Prostate gland (tissue), 2 donors: ENCODE measurements at regions of chr6 and their contacts with region 1.

Region 1: GRCh38 chr6:3929281-3929798 is 80.2 kb downstream of the FAM50B start:
- DNase-seq: no peak
- H3K4me3 ChIP-seq: no peak overlapping the region
- H3K27ac ChIP-seq: no peak overlapping the region
- H3K4me1 ChIP-seq: no peaks in the 10 kb centered on the region
- H3K27me3 ChIP-seq: no peaks in the 10 kb centered on the region
- CTCF ChIP-seq: no peak
- POLR2A ChIP-seq: no peak

Region 2: GRCh38 chr6:3742426-3743344 is 186.7 kb before region 1 on chr6:
- intact Hi-C with region 1: loop called (anchors 1 kb)
- DNase-seq: peak; percentile 86
- H3K4me3 ChIP-seq: no peak overlapping the region
- H3K27ac ChIP-seq: peak overlapping the region; percentile 65 to 71
- H3K4me1 ChIP-seq: peaks cover 23% of the 10 kb centered on the region
- H3K27me3 ChIP-seq: no peaks in the 10 kb centered on the region
- CTCF ChIP-seq: peak; percentile 93 to 99 (median 96)
- POLR2A ChIP-seq: no peak

Region 3: DNA sequence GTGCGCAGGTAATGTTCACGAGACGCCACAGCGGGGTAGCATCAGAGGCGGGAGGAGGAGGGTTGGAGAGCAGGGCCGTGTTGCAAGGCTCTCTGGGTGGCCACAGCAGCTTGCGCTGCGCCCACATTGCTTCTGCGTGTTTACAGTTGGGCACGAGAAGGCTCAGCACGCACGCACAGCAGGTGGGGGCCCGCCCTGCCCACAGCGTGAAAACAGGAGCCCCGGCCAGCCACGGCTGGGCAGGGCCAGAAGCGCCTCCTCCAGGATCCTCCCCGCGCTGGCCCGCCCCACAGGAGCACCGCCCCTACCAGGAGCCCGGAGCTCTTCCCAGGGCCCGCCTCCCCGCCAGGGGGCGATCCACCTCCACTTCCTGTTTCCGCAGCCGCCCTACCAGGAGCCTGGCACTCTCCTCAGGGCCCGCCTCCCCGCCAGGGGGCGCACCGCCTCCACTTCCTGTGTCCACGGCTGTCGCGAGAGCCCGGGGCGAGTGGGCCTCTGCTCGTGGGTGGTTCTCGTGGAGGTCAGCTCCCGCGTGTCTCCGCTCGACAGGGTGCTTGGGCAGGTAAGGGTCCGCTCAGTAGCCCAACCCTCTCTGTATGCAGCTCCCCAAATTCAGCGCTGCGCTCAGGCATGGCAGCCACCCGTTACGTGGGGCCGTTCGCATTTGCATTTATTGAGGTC is 80.3 kb before region 1 on chr6 and contains the start of gene FAM50B:
- intact Hi-C with region 1: loop called (anchors 1 kb)
- DNase-seq: peak; percentile 90
- H3K4me3 ChIP-seq: peak within 1 kb of the TSS; percentile 31 to 38
- H3K27ac ChIP-seq: peak within 1 kb of the TSS; percentile 47 to 64
- H3K4me1 ChIP-seq: no peaks in the 10 kb centered on the region
- H3K27me3 ChIP-seq: no peaks in the 10 kb centered on the region
- CTCF ChIP-seq: peak; percentile 93 to 98 (median 96)
- POLR2A ChIP-seq: peak; percentile 48
- total RNA-seq, gene FAM50B: 14.2 to 36.4 TPM

Region 4: DNA sequence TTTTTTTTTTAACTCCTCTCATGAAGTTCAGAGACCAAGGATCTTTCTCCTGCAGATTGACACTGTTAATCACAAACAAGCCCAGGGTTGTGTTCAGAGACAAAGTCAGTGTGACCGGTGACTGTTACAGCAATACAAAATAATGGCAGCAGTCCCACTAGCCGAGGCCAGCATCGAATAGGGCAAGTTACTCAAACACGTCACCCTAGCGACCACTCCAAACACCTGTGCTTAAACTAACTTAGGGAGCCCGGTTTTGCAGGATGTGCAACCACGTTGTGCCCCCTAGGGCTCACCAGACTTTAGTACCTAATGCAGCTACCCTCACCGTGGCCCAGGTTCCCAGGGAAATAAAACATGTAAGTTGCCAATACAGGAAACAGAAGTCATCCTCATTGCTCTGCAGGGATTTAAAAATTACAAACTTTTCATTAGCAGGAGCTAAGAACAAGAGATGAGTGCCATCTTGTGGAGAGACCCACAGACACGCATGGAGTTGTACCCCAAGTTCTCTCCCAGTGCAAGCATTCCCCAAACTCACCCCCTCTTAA is 42.1 kb before region 1 on chr6:
- intact Hi-C with region 1: loop called (anchors 5 kb)
- DNase-seq: no peak
- H3K4me3 ChIP-seq: no peak overlapping the region
- H3K27ac ChIP-seq: no peak overlapping the region
- H3K4me1 ChIP-seq: no peaks in the 10 kb centered on the region
- H3K27me3 ChIP-seq: no peaks in the 10 kb centered on the region
- CTCF ChIP-seq: peak in 3 of 4 experiments; percentile 31 to 36 (median 32)
- POLR2A ChIP-seq: no peak